ENCODE measurements at regions of chr6 and their contacts with region 1.

Region 1: DNA sequence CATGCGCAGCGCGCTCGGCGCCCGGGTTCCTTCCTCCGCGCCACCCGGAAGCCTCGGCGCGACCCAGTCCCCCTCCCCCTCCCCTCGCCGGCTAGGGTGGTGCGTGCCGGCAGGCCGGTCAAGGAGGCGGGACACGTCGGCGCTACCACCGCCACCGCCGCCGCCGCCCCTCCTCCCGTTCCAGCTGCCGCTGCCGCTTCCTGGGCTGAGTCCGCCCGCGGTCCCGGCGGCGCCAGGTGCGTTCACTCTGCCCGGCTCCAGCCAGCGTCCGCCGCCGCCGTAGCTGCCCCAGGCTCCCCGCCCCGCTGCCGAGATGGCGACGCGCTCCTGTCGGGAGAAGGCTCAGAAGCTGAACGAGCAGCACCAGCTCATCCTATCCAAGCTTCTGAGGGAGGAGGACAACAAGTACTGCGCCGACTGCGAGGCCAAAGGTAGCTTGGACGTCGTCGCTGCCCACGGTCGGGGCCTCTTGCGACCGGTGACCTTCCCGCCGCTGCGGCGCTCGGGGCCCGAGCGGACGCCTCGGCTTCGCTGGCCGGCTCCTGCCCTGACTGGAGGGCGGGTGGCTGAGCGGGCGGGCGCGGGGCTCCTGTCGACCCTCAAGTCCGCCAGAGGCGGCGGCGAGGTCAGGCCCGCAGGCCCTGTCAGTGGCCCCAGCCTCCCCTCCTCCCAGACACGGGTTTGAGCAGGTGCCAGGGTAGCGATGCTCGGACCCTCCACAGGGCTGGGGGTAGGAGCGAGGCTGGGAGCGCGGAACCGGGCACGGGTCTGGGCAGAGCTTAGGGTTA is at the start of gene SMAP1:
- DNase-seq: peak; percentile 94
- ATAC-seq: peak; percentile 96
- H3K4me3 Mint-ChIP-seq: peak within 1 kb of the TSS; percentile 85
- H3K27ac Mint-ChIP-seq: peak within 1 kb of the TSS; percentile 92
- H3K4me1 Mint-ChIP-seq: peaks cover 41% of the 10 kb centered on the region
- H3K27me3 Mint-ChIP-seq: no peaks in the 10 kb centered on the region
- CTCF ChIP-seq: no peak
- total RNA-seq, gene SMAP1: 20.7 and 21.6 TPM in 2 replicates

Region 2: GRCh38 chr6:70566751-70567382 is 101.0 kb before region 1 on chr6 and contains the start of gene SDHAF4:
- CTCF ChIA-PET with region 1: interaction called, 6 read pairs
- POLR2A ChIA-PET with region 1: interaction called, 17 read pairs
- intact Hi-C with region 1: loop called (anchors 1 kb)
- DNase-seq: peak; percentile 93
- ATAC-seq: peak; percentile 99
- H3K4me3 Mint-ChIP-seq: peak within 1 kb of the TSS; percentile 86
- H3K27ac Mint-ChIP-seq: peak within 1 kb of the TSS; percentile 89
- H3K4me1 Mint-ChIP-seq: peaks cover 15% of the 10 kb centered on the region
- H3K27me3 Mint-ChIP-seq: no peaks in the 10 kb centered on the region
- CTCF ChIP-seq: no peak
- total RNA-seq, gene SDHAF4: 7.6 and 8.3 TPM in 2 replicates

Region 3: GRCh38 chr6:72382602-72383529 is 1715.0 kb after region 1 on chr6:
- CTCF ChIA-PET with region 1: no interaction called
- POLR2A ChIA-PET with region 1: no interaction called
- intact Hi-C with region 1: loop called (anchors 2 kb)
- DNase-seq: no peak
- ATAC-seq: peak; percentile 88
- H3K4me3 Mint-ChIP-seq: peak overlapping the region; percentile 65
- H3K27ac Mint-ChIP-seq: peak overlapping the region; percentile 88
- H3K4me1 Mint-ChIP-seq: peaks cover 35% of the 10 kb centered on the region
- H3K27me3 Mint-ChIP-seq: no peaks in the 10 kb centered on the region
- CTCF ChIP-seq: no peak

Measured in activated B cell treated with CpG ODN at 0.5 μM for 24 hours (primary cell).